A673 (cell line): ENCODE measurements at regions of chr1 and their contacts with region 1.

Region 1: GRCh38 chr1:210584439-210585113 is 255.9 kb downstream of the HHAT start:
- DNase-seq: peak; percentile 91
- H3K4me3 ChIP-seq: no peak overlapping the region
- H3K27ac ChIP-seq: no peak overlapping the region
- H3K4me1 ChIP-seq: no peaks in the 10 kb centered on the region
- H3K27me3 ChIP-seq: peaks cover 24% of the 10 kb centered on the region
- CTCF ChIP-seq: peak; percentile 87

Region 2: GRCh38 chr1:209276321-209276720 is 1308.3 kb before region 1 on chr1:
- CTCF ChIA-PET with region 1: no interaction called
- POLR2A ChIA-PET with region 1: no interaction called
- intact Hi-C with region 1: no loop called
- DNase-seq: no peak
- H3K4me3 ChIP-seq: no peak overlapping the region
- H3K27ac ChIP-seq: no peak overlapping the region
- H3K4me1 ChIP-seq: no peaks in the 10 kb centered on the region
- H3K27me3 ChIP-seq: peaks cover 6% of the 10 kb centered on the region
- CTCF ChIP-seq: no peak

Region 3: DNA sequence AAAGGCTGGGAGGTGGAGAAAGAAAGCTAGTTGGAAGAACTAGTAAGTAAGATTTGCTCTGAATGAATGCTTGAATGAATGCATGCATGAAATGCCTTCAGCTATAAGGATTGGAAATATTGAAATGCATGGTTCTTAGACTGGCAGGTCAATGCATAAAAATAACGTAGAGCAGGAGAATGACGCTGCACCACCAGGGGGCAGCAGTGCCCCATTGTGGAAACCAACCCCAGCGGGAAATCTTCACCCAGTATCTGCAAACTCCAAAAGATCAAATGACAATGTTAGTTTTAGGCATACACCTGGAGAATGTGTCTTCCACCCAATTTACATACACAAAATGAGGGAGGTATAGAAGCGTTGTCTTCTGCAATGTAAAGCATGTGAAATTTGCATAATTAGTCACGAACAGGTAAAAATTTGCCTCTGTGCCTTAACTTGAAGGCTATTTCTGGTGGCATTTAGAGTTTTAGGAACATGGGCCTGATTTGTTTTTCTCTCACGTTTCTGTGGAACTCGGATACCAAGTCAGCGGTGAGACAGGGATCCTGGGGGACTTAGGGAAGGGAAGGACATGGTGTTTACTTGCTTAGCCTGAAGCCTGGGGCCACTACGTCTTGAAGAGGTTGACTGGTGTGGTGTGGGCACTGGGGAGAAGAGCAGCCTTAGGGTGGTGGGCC is 177.2 kb before region 1 on chr1:
- CTCF ChIA-PET with region 1: no interaction called
- POLR2A ChIA-PET with region 1: no interaction called
- intact Hi-C with region 1: loop called (anchors 1 kb)
- DNase-seq: peak; percentile 80
- H3K4me3 ChIP-seq: no peak overlapping the region
- H3K27ac ChIP-seq: no peak overlapping the region
- H3K4me1 ChIP-seq: no peaks in the 10 kb centered on the region
- H3K27me3 ChIP-seq: peaks cover 3% of the 10 kb centered on the region
- CTCF ChIP-seq: peak; percentile 98

Region 4: GRCh38 chr1:210448297-210448892 is 136.2 kb before region 1 on chr1:
- CTCF ChIA-PET with region 1: no interaction called
- POLR2A ChIA-PET with region 1: no interaction called
- intact Hi-C with region 1: loop called (anchors 2 kb)
- DNase-seq: peak; percentile 74
- H3K4me3 ChIP-seq: no peak overlapping the region
- H3K27ac ChIP-seq: no peak overlapping the region
- H3K4me1 ChIP-seq: peaks cover 6% of the 10 kb centered on the region
- H3K27me3 ChIP-seq: no peaks in the 10 kb centered on the region
- CTCF ChIP-seq: peak; percentile 73

Region 5: DNA sequence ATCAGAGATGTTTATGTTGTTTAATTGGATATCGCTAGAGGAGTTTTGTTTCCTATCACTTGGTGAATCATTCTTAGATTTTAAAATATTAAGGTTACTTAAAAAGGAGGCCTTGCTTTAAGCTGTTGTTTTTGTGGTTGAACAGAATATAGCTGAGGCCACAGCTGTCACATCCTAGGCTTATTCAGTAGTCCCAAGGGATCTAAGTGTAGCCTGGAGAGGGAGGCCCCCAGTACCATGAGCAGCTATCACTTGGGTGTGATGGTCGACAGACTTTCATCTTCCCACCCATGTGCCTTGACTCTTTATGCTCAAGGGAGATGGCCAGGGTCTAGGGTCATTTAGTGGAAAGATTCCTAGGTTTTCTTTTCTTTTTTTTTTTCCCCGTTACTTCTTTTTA is 22.8 kb after region 1 on chr1:
- CTCF ChIA-PET with region 1: no interaction called
- POLR2A ChIA-PET with region 1: no interaction called
- intact Hi-C with region 1: no loop called
- DNase-seq: no peak
- H3K4me3 ChIP-seq: no peak overlapping the region
- H3K27ac ChIP-seq: no peak overlapping the region
- H3K4me1 ChIP-seq: no peaks in the 10 kb centered on the region
- H3K27me3 ChIP-seq: peaks cover 18% of the 10 kb centered on the region
- CTCF ChIP-seq: no peak

Region 6: DNA sequence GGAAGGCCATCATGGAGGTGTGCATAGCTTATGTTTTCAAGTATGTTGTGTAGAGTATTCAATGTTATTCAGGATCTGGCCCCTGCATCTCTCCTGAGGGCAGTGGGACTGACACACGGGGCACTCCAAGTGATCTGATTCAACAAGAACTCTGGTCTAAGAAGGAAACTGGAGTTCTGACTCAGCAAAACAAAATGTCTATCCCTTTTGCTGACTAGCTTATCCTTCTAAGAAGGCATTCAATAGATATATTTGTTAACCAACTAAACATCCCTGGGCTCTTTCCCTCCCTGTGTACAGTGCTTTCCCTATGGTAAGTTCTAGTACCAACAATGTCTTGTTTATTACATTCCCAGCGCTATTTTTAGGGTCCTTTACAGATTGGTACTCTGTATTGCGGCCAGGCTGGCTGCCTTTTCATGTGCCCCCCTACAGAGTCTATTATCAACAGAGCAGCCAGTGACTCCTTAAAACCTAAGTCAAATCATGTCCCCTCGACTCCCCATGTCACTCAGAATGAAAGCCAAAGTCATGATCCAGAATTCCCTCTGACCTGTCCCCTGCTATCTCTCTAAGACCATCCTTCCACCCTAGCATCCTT is 244.5 kb after region 1 on chr1:
- CTCF ChIA-PET with region 1: no interaction called
- POLR2A ChIA-PET with region 1: no interaction called
- intact Hi-C with region 1: no loop called
- DNase-seq: no peak
- H3K4me3 ChIP-seq: no peak overlapping the region
- H3K27ac ChIP-seq: no peak overlapping the region
- H3K4me1 ChIP-seq: no peaks in the 10 kb centered on the region
- H3K27me3 ChIP-seq: peaks cover 34% of the 10 kb centered on the region
- CTCF ChIP-seq: no peak

Region 7: GRCh38 chr1:210951279-210951678 is 366.7 kb after region 1 on chr1:
- CTCF ChIA-PET with region 1: no interaction called
- POLR2A ChIA-PET with region 1: no interaction called
- intact Hi-C with region 1: loop called (anchors 1 kb)
- DNase-seq: peak; percentile 12
- H3K4me3 ChIP-seq: no peak overlapping the region
- H3K27ac ChIP-seq: no peak overlapping the region
- H3K4me1 ChIP-seq: no peaks in the 10 kb centered on the region
- H3K27me3 ChIP-seq: peaks cover 15% of the 10 kb centered on the region
- CTCF ChIP-seq: no peak

Region 8: DNA sequence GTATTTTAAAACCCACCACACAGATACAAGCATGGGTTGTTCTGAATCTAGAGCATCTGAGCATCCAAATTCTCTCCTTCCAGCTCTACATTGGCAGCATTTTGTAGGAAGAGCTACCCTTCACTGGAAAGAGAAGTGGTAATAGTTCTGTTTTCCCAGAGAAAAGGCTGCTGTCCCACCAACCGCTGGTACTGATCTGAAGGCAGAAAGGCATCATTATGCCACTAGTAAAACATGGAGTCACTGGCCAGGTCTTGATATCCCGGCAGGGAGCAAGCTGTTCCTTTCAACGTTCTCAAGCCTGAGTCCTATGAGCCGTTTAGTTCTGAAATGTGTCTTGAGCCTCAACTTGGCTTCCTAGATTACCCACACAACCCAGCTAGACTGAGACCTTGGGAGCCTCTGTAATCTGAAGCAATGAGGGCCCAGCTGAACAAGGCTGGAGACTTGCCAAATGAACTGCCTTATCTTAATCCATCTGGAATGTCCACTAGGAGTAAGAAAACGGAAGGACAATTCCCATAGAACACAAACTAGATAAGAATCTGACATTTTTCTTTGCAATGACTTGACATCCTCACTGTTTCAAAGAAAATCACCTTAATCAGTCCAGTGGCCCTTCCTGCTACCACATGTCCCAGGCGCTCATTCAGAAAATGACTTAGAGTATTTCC is 432.6 kb after region 1 on chr1:
- CTCF ChIA-PET with region 1: no interaction called
- POLR2A ChIA-PET with region 1: no interaction called
- intact Hi-C with region 1: loop called (anchors 10 kb)
- DNase-seq: no peak
- H3K4me3 ChIP-seq: no peak overlapping the region
- H3K27ac ChIP-seq: no peak overlapping the region
- H3K4me1 ChIP-seq: no peaks in the 10 kb centered on the region
- H3K27me3 ChIP-seq: peaks cover 23% of the 10 kb centered on the region
- CTCF ChIP-seq: no peak

Region 9: DNA sequence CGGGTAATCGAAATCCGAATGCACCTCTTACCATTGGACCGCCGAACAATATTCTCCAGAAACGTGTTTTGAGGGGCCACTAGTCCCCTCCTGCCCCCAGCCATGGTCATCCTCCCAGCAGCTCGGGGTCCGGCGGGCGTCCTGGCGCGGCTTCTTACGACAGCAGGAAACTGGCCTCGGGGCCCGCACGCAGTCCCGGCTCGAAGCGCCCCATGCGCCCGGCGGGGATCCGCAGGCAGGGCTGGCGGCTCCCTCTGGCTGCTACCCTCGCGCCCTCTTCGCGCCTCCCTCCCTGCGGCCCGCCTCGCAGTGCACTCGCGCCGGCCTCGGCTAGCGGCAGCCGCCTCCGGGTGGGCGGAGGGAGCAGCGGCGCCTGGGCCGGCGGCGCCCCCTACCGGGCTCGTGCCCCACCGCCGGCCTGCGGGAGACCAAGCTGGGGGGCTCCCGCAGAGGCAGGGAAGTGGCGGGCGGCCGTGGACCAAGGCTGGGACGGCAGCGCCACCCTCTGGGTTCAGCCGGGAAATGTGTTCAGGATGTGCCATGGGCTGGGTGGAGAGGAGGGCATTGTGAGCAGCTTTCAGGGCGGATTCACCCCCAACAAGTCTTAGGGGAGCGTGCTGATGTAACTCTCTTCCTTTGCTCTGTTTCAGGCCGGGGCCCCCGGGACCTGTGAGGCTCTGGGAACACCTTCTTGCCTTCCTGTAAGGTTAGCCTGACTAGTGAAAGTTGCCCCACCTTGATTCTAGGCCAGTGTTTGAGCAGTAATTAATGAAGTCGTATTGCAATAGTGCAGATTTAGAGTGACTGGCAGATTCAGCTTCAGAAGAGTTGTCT is 549.5 kb after region 1 on chr1 and contains the start of gene KCNH1:
- CTCF ChIA-PET with region 1: interaction called, 14 read pairs
- POLR2A ChIA-PET with region 1: no interaction called
- intact Hi-C with region 1: loop called (anchors 1 kb)
- DNase-seq: peak; percentile 91
- H3K4me3 ChIP-seq: peak within 1 kb of the TSS; percentile 28
- H3K27ac ChIP-seq: no peak within 1 kb of the TSS
- H3K4me1 ChIP-seq: peaks cover 9% of the 10 kb centered on the region
- H3K27me3 ChIP-seq: peaks cover 76% of the 10 kb centered on the region
- CTCF ChIP-seq: peak; percentile 85
- total RNA-seq, gene KCNH1: not detected in 2 replicates